AG04449 (cell line): ENCODE measurements at regions of chr1 and their contacts with region 1.

Region 1: DNA sequence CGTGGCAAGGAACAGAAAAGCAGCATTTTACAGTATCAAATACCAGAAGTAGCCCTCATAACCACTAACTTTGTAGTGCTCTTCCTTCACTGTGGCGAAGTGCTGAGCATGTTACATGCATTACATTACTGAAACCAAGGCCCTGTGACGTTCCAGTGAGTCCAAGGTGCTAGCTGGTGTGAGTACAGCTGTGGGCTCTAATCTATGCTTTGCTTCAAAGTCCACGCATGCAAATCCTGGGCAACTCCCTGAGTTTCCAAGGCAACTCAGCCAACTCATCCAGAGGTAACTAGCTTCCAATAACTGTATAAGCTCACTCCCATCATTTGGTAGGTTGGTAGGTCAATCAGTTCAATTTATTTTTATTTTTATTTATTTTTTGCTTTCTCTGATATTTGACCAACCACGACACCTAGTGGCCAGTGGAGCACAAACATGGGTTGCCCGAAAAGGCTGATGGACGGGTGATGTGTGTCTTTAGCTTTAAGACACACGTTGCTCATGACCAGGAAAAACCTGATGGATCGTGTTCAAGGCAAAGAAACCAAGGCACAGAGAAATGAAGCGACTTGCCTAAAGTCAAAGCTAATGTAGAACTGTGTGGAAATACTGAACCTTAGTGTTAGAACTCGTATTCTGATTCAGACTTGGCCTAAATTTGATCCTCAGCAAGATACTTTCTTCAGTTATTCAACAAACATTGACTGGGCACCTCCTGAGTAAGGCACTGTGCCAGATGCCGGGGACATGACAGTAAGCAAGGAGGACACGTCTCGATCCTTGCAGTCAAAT is 73.0 kb downstream of the GNG12 start:
- DNase-seq: no peak
- H3K4me3 ChIP-seq: no peak overlapping the region
- CTCF ChIP-seq: peak; percentile 59

Region 2: GRCh38 chr1:67570473-67571143 is 189.6 kb before region 1 on chr1:
- CTCF ChIA-PET with region 1: interaction called, 42 read pairs
- POLR2A ChIA-PET with region 1: no interaction called
- DNase-seq: peak; percentile 86
- H3K4me3 ChIP-seq: no peak overlapping the region
- CTCF ChIP-seq: no peak

Region 3: GRCh38 chr1:67700692-67701410 is 59.4 kb before region 1 on chr1:
- CTCF ChIA-PET with region 1: interaction called, 18 read pairs
- POLR2A ChIA-PET with region 1: no interaction called
- DNase-seq: no peak
- H3K4me3 ChIP-seq: no peak overlapping the region
- CTCF ChIP-seq: no peak

Region 4: DNA sequence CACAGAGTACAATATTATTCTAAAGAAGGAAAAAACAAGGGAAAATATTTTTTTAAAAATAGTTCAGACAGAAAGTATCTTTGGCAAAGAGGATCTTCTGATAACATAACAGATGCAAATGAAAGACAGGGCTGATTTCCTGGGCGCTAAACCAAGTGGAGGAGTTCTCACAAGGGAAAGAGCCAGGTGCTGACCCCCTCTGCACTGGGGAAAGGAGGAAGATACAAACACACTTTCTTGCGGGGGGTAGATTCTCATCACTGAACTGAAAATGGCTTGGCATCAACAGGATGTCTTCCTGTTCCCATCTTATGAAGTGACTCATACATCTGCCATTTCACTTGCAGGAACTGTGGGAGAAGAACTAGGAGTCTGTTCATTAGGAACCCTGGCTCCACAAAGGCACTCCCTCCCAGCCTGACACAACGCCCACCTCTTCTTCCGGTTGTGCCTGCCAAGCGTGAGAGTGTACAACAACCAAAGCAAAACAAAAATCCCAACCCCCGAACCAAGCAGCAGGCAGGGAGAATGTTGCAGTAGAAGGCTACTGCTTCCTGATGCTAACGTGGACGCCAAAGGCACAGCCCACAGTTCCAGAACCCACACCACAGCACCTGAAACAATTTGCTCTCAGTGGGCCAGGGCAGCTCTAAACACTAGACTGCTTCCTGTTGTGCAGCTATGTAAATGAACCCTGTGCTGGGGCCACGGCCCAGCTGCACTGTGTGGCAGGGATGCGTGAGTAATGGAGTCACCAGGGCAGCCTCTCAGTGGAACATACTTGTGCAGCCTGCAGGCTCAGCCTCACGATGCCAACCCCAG is 24.2 kb before region 1 on chr1:
- CTCF ChIA-PET with region 1: interaction called, 18 read pairs
- POLR2A ChIA-PET with region 1: no interaction called
- DNase-seq: peak; percentile 82
- H3K4me3 ChIP-seq: no peak overlapping the region; the same call in 1 of the 2 replicates
- CTCF ChIP-seq: no peak

Region 5: GRCh38 chr1:67791686-67792475 is 31.7 kb after region 1 on chr1:
- CTCF ChIA-PET with region 1: interaction called, 96 read pairs
- POLR2A ChIA-PET with region 1: no interaction called
- DNase-seq: peak; percentile 91
- H3K4me3 ChIP-seq: peak overlapping the region; percentile 13
- CTCF ChIP-seq: no peak